Naive thymus-derived CD4-positive, alpha-beta T cell (primary cell): ENCODE measurements at regions of chr11 and their contacts with region 1.

Region 1: GRCh38 chr11:95150946-95151684 is 61.5 kb downstream of the ENDOD1 start:
- DNase-seq: peak; percentile 74 to 93 (median 90)
- ATAC-seq: peak; percentile 97
- H3K4me3 ChIP-seq: peak overlapping the region; percentile 91
- H3K4me3 Mint-ChIP-seq: peak overlapping the region; percentile 81 to 92 (median 88)
- H3K27ac ChIP-seq: peak overlapping the region; percentile 75
- H3K27ac Mint-ChIP-seq: peak overlapping the region; percentile 92 to 99 (median 96)
- H3K4me1 ChIP-seq: peaks cover 19 to 22% of the 10 kb centered on the region in 2 donors
- H3K4me1 Mint-ChIP-seq: peaks cover 22 to 53% (median 32%) of the 10 kb centered on the region in 7 donors
- H3K27me3 ChIP-seq: no peaks in the 10 kb centered on the region
- H3K27me3 Mint-ChIP-seq: peaks cover 0 to 5% (median 3%) of the 10 kb centered on the region in 5 donors

Region 2: DNA sequence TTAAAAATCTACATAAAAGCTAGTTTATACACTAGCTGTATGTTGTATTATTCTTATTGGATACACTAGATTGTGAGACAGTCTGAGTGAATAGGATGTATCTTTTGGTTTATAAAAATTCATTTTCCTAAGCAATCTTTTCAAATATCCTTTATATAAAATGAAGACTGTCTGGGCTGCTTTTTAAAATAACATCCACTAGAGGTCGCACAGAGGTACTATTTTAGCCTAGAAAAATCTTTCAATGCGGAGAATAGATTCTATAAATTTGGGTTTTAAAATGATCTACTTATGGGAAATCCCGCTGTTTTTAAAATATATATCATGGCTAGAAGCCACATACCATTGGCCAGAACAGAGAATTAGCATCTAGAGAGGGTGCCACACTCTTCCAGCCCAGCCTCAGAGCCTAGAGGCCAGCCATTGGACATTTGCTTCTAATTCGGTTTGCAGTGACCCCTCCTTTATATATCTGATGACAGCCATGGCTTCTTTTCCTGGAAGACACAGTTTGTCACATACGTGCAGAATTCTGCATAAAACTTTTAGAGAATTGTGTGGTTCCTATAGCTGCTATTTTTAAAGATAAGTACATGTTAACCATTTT is 631.5 kb before region 1 on chr11:
- CTCF ChIA-PET with region 1: no interaction called
- POLR2A ChIA-PET with region 1: no interaction called
- intact Hi-C with region 1: loop called in 1 of 2 experiments (anchors 1 kb)
- DNase-seq: peak in 4 of 9 donors; percentile 18 to 41 (median 26)
- ATAC-seq: peak; percentile 70
- H3K4me3 ChIP-seq: no peak overlapping the region
- H3K4me3 Mint-ChIP-seq: no peak overlapping the region
- H3K27ac ChIP-seq: no peak overlapping the region
- H3K27ac Mint-ChIP-seq: no peak overlapping the region
- H3K4me1 ChIP-seq: no peaks in the 10 kb centered on the region
- H3K4me1 Mint-ChIP-seq: no peaks in the 10 kb centered on the region
- H3K27me3 ChIP-seq: no peaks in the 10 kb centered on the region
- H3K27me3 Mint-ChIP-seq: peaks cover 15 to 40% (median 21%) of the 10 kb centered on the region in 5 donors

Region 3: GRCh38 chr11:95089620-95090542 is 61.2 kb before region 1 on chr11 and contains the start of gene ENDOD1:
- CTCF ChIA-PET with region 1: interaction called, 10 read pairs
- POLR2A ChIA-PET with region 1: interaction called, 52 read pairs
- intact Hi-C with region 1: loop called (anchors 1 kb)
- DNase-seq: peak; percentile 81 to 89 (median 87)
- ATAC-seq: peak; percentile 98
- H3K4me3 ChIP-seq: peak within 1 kb of the TSS; percentile 79
- H3K4me3 Mint-ChIP-seq: peak within 1 kb of the TSS; percentile 86 to 95 (median 92)
- H3K27ac ChIP-seq: peak within 1 kb of the TSS; percentile 87
- H3K27ac Mint-ChIP-seq: peak within 1 kb of the TSS; percentile 96 to 99 (median 98)
- H3K4me1 ChIP-seq: peaks cover 16 to 31% of the 10 kb centered on the region in 2 donors
- H3K4me1 Mint-ChIP-seq: peaks cover 24 to 61% (median 49%) of the 10 kb centered on the region in 7 donors
- H3K27me3 ChIP-seq: no peaks in the 10 kb centered on the region
- H3K27me3 Mint-ChIP-seq: no peaks in the 10 kb centered on the region
- total RNA-seq, gene ENDOD1: 4.7 to 23.2 (median 8.6) TPM

Region 4: GRCh38 chr11:95119374-95120060 is 31.6 kb before region 1 on chr11:
- CTCF ChIA-PET with region 1: no interaction called
- POLR2A ChIA-PET with region 1: no interaction called
- intact Hi-C with region 1: no loop called
- DNase-seq: no peak
- ATAC-seq: no peak
- H3K4me3 ChIP-seq: no peak overlapping the region
- H3K4me3 Mint-ChIP-seq: no peak overlapping the region
- H3K27ac ChIP-seq: no peak overlapping the region
- H3K27ac Mint-ChIP-seq: no peak overlapping the region
- H3K4me1 ChIP-seq: no peaks in the 10 kb centered on the region
- H3K4me1 Mint-ChIP-seq: peaks cover 0 to 13% (median 5%) of the 10 kb centered on the region in 7 donors
- H3K27me3 ChIP-seq: no peaks in the 10 kb centered on the region
- H3K27me3 Mint-ChIP-seq: no peaks in the 10 kb centered on the region

Region 5: DNA sequence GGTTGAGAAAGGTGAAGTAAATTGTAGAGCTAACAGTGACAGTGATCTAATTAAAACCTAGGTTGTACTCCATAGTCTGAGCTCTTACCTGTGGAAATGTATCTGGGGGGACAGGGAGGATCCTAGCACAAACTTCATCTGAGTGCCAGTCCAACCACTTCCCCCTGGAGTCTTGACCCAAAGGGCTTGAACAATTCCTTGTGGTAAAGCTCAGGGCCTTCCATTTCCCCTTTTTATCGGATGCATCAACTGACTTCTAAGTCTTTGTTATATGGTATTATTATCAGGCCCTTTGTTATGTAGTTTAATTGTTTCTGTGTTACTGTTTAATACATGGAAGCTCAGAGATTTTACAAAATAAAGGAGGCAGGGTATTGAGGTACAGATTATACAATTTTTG is 220.0 kb after region 1 on chr11:
- CTCF ChIA-PET with region 1: no interaction called
- POLR2A ChIA-PET with region 1: no interaction called
- intact Hi-C with region 1: loop called in 1 of 2 experiments (anchors 2 kb)
- DNase-seq: no peak
- ATAC-seq: no peak
- H3K4me3 ChIP-seq: no peak overlapping the region
- H3K4me3 Mint-ChIP-seq: no peak overlapping the region
- H3K27ac ChIP-seq: no peak overlapping the region
- H3K27ac Mint-ChIP-seq: no peak overlapping the region
- H3K4me1 ChIP-seq: no peaks in the 10 kb centered on the region
- H3K4me1 Mint-ChIP-seq: peaks cover 0 to 9% (median 0%) of the 10 kb centered on the region in 7 donors
- H3K27me3 ChIP-seq: no peaks in the 10 kb centered on the region
- H3K27me3 Mint-ChIP-seq: peaks cover 0 to 9% (median 0%) of the 10 kb centered on the region in 5 donors

Region 6: DNA sequence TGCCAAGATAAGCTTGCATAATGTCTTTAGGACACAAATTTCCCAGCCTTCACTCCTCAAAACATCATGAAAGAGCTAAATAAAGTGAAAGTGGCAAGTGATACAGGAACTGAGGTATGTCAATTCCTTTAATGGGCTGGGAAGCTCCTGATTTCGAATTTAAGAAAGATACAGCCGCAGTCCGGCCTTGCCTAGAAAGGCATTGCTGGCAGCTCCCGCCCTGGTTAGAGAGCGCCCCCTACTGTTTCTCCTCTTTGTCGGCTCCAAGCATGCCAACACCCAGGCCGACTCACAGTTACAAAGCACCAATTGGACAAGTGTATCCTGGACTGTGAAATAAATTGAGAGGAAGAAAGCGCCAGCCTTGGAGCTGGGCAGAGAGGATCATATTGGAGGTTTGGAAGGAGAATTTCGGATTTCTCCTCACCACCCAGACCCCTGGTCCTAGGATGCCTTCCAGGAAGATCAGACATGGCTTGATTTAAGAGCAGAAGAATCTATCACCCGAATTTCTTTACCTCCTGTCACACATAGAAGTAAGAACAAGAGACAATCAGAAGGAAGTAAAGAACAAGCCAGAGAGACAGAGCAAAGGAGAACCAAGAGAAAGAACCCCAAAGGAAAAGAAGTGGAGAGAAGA is 554.5 kb after region 1 on chr11:
- CTCF ChIA-PET with region 1: interaction called, 192 read pairs
- POLR2A ChIA-PET with region 1: interaction called, 127 read pairs
- intact Hi-C with region 1: loop called (anchors 1 kb)
- DNase-seq: peak; percentile 67 to 91 (median 86)
- ATAC-seq: peak; percentile 98
- H3K4me3 ChIP-seq: no peak overlapping the region
- H3K4me3 Mint-ChIP-seq: no peak overlapping the region
- H3K27ac ChIP-seq: peak overlapping the region; percentile 55
- H3K27ac Mint-ChIP-seq: no peak overlapping the region
- H3K4me1 ChIP-seq: peaks cover 29 to 43% of the 10 kb centered on the region in 2 donors
- H3K4me1 Mint-ChIP-seq: peaks cover 3 to 15% (median 11%) of the 10 kb centered on the region in 7 donors
- H3K27me3 ChIP-seq: no peaks in the 10 kb centered on the region
- H3K27me3 Mint-ChIP-seq: peaks cover 0 to 3% (median 0%) of the 10 kb centered on the region in 5 donors

Region 7: DNA sequence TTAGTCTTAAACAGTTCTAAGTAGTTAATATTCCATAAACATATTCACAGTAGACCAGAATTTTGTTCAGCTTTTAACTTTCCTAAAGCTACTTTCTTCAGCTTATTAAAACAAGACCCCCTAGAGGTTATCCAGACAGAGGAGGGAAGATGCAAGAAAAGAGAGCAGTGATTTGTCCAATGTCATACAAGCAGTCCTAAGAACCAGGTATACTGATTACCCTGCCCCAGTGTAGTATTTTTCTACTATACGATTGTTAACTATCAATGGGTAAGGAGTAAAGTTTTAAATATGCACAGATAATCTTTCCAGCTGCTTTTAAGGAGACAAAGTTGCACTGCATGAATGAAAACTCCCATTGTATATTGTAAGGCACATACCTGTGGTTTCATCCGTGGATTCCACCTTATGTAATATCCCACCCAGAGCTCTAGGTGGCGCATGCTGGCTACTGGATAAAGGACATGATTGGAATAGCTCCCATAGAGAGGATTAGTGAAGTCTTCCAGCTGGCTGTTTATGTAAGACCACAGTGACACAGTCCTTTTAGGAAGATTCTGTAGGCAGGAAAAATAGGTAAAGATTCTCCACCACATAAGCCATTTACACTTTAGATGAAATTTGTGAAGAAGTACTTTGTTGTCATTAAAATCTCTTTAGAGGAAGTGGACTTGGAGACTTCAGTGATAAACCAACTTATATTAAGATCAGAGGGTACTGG is 684.8 kb after region 1 on chr11:
- CTCF ChIA-PET with region 1: no interaction called
- POLR2A ChIA-PET with region 1: no interaction called
- intact Hi-C with region 1: loop called (anchors 5 kb)
- DNase-seq: peak; percentile 17 to 67 (median 49)
- ATAC-seq: peak; percentile 96
- H3K4me3 ChIP-seq: no peak overlapping the region
- H3K4me3 Mint-ChIP-seq: no peak overlapping the region
- H3K27ac ChIP-seq: no peak overlapping the region
- H3K27ac Mint-ChIP-seq: peak overlapping the region in 4 of 9 donors; percentile 17 to 65 (median 28)
- H3K4me1 ChIP-seq: no peaks in the 10 kb centered on the region
- H3K4me1 Mint-ChIP-seq: peaks cover 0 to 5% (median 0%) of the 10 kb centered on the region in 7 donors
- H3K27me3 ChIP-seq: no peaks in the 10 kb centered on the region
- H3K27me3 Mint-ChIP-seq: no peaks in the 10 kb centered on the region

Region 8: DNA sequence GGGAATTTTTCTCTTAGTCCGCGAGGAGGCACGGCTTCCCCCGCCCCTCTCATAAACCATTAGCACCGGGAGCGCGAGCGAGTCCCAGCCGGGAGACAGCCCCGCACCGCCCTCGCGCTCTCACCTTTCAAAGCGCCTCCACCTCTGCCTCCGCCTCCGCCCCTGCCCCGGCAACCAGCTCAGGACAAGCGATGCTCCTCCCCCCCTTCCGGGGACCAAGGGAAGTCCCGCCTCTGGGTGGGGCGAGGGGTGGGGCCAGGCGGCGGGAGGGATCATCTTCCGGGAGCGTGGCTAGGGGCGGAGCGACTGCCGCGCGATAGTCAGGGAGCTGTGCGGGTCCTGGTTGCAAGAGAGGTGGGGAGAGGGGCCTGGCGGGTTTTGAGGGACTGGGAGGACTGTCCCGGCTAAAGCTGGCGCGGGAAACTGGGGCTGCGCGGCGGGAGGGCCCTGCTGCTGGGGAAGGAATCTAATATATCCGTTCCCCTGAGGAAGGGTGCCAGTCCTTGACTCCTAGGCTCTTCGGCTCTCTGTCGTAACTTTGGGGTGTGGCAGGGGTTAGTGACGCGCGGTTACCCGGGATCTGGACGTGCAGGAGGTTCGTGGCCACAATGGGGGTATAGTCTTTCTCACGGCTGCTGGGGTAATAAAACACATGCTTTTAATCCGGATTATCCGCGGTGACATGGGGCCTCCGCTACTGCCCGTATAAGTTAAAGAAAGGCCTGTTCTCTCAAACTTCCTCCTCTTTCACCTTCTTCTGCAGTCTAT is 1238.8 kb after region 1 on chr11 and contains the starts of genes CCDC82 and JRKL:
- CTCF ChIA-PET with region 1: no interaction called
- POLR2A ChIA-PET with region 1: no interaction called
- intact Hi-C with region 1: loop called (anchors 1 to 2 kb)
- DNase-seq: peak; percentile 96 to 99 (median 98)
- ATAC-seq: peak; percentile 99
- H3K4me3 ChIP-seq: peak within 1 kb of the TSS; percentile 66
- H3K4me3 Mint-ChIP-seq: peak within 1 kb of the TSS; percentile 84 to 99 (median 94)
- H3K27ac ChIP-seq: peak within 1 kb of the TSS; percentile 86
- H3K27ac Mint-ChIP-seq: peak within 1 kb of the TSS; percentile 71 to 97 (median 91)
- H3K4me1 ChIP-seq: peaks cover 17 to 18% of the 10 kb centered on the region in 2 donors
- H3K4me1 Mint-ChIP-seq: peaks cover 32 to 66% (median 60%) of the 10 kb centered on the region in 7 donors
- H3K27me3 ChIP-seq: no peaks in the 10 kb centered on the region
- H3K27me3 Mint-ChIP-seq: no peaks in the 10 kb centered on the region
- total RNA-seq, gene CCDC82: 21.9 to 46.2 (median 32.0) TPM
- total RNA-seq, gene JRKL: 5.4 to 17.3 (median 10.1) TPM